ENCODE measurements at regions of chr5 and their contacts with region 1.

Region 1: DNA sequence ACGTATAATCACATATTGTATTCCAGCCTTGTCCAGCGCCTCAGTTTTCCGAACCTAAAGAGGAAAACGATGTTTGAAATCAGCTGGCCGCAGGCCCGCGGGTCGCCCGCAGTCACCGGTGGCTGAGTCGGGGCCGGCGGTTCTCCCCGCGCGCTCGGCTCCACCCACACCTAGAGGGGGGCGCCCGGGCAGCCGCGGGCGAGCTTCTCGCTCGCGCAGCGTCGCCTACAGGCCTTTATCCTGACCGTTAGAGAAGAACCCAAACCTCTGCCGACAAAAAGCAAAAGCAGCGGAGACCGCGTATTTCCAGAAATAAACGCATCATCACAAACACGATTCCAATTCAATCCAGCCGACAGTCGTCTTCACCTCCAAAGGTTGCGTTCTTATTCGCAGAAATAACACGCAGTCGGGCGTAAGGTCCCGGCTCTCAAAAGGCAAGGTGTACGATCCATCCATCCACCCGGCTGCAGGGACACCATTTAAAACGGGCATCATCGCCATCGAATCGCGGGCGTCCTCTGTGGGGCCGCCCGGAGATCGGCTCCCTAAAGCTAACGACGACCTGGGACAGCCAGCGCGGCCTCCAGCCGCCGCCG is 680 bp upstream of the NIPBL start:
- DNase-seq: peak; percentile 72
- H3K4me3 Mint-ChIP-seq: peak overlapping the region; percentile 89
- H3K27ac Mint-ChIP-seq: peak overlapping the region; percentile 65
- H3K4me1 Mint-ChIP-seq: peaks cover 13% of the 10 kb centered on the region
- H3K27me3 Mint-ChIP-seq: no peaks in the 10 kb centered on the region
- CTCF ChIP-seq: peak; percentile 26

Region 2: GRCh38 chr5:36944607-36945225 is 68.8 kb after region 1 on chr5:
- CTCF ChIA-PET with region 1: interaction called, 4 read pairs
- intact Hi-C with region 1: loop called (anchors 1 kb)
- DNase-seq: no peak
- H3K4me3 Mint-ChIP-seq: no peak overlapping the region
- H3K27ac Mint-ChIP-seq: no peak overlapping the region
- H3K4me1 Mint-ChIP-seq: peaks cover 34% of the 10 kb centered on the region
- H3K27me3 Mint-ChIP-seq: no peaks in the 10 kb centered on the region
- CTCF ChIP-seq: peak; percentile 30

Region 3: GRCh38 chr5:37005946-37006540 is 130.2 kb after region 1 on chr5:
- CTCF ChIA-PET with region 1: interaction called, 3 read pairs
- intact Hi-C with region 1: loop called (anchors 5 kb)
- DNase-seq: no peak
- H3K4me3 Mint-ChIP-seq: no peak overlapping the region
- H3K27ac Mint-ChIP-seq: no peak overlapping the region
- H3K4me1 Mint-ChIP-seq: no peaks in the 10 kb centered on the region
- H3K27me3 Mint-ChIP-seq: no peaks in the 10 kb centered on the region
- CTCF ChIP-seq: peak; percentile 34

Measured in Calu3 (cell line).